ENCODE measurements at regions of chr7 and their contacts with region 1.

Region 1: DNA sequence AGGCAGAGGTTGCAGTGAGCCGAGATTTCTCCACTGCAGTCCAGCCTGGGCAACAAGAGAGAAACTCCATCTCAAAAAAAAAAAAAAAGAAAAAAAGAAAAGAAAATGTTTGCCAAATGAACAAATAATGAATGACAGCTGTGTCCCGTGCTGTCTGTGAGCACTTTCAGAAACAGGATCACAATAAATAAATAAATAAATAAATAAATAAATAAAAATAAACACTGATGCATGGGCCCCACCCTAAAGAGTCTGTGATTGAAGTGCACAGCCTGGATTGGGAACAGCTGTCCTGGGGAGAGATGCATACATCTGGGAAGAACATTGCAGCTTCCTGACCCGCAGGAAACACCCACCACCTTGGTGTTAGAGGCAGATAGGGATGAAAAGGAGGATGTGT is 123.6 kb downstream of the NPTX2 start:
- DNase-seq: no peak
- ATAC-seq: no peak
- H3K4me3 ChIP-seq: no peak overlapping the region
- H3K27ac ChIP-seq: no peak overlapping the region
- H3K4me1 ChIP-seq: no peaks in the 10 kb centered on the region
- H3K27me3 ChIP-seq: peaks cover 0 to 5% (median 0%) of the 10 kb centered on the region in 9 donors
- CTCF ChIP-seq: no peak
- POLR2A ChIP-seq: no peak

Region 2: DNA sequence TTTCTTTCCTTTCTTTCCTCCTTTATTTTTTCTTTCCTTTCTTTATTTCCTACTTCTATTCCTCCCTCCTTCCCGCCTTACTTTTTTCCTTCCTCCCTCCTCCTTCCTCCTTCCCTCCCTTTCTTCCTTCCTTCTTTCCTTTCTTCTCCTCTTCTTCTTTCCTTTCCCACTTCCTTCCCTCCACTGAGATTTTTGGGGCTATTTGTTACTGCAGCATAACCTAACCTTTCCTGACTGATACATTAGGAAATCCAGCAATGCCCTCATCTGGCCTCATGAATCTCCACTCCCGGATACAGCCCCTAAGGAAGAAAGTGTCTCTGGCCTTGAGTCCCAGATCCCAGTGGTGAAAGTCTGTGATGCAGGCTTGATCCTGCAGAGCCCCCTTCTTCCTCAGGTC is 301.2 kb before region 1 on chr7:
- intact Hi-C with region 1: loop called in 7 of 10 experiments (anchors 2 to 5 kb)
- DNase-seq: no peak
- ATAC-seq: no peak
- H3K4me3 ChIP-seq: no peak overlapping the region
- H3K27ac ChIP-seq: no peak overlapping the region
- H3K4me1 ChIP-seq: no peaks in the 10 kb centered on the region
- H3K27me3 ChIP-seq: peaks cover 0 to 3% (median 0%) of the 10 kb centered on the region in 9 donors
- CTCF ChIP-seq: no peak
- POLR2A ChIP-seq: no peak